Natural killer cell (primary cell): ENCODE measurements at regions of chr18 and their contacts with region 1.

Region 1: GRCh38 chr18:5879479-5879882 is 15.8 kb downstream of the TMEM200C start:
- DNase-seq: peak in 1 of 2 donors; percentile 10
- ATAC-seq: peak in 1 of 3 donors; percentile 35
- H3K4me3 ChIP-seq: no peak overlapping the region
- H3K4me3 Mint-ChIP-seq: no peak overlapping the region
- H3K27ac ChIP-seq: no peak overlapping the region
- H3K27ac Mint-ChIP-seq: no peak overlapping the region
- H3K4me1 ChIP-seq: no peaks in the 10 kb centered on the region
- H3K4me1 Mint-ChIP-seq: no peaks in the 10 kb centered on the region
- H3K27me3 ChIP-seq: peaks cover 2% of the 10 kb centered on the region
- H3K27me3 Mint-ChIP-seq: peaks cover 12 to 35% of the 10 kb centered on the region in 2 donors
- CTCF ChIP-seq: peak; percentile 89

Region 2: DNA sequence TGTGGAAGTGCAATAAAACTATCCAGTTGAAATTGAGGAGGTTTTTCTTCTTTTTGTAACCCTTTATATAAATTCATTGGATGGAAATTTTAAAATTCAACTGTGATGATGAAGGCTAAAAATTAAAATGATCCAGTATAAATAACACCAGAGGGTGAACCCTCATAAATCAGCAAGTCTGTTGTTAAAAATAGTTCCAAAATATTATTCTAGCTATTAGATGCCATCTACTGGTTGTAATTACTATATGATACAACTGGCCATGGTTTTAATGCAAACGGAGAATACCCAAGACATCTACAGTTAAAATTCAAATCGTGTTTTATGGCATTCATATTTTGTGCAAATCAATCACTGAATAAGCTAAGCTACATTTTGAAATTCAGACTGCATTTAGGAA is 38.0 kb before region 1 on chr18:
- intact Hi-C with region 1: no loop called
- DNase-seq: no peak
- ATAC-seq: no peak
- H3K4me3 ChIP-seq: no peak overlapping the region
- H3K4me3 Mint-ChIP-seq: no peak overlapping the region
- H3K27ac ChIP-seq: no peak overlapping the region
- H3K27ac Mint-ChIP-seq: no peak overlapping the region
- H3K4me1 ChIP-seq: no peaks in the 10 kb centered on the region
- H3K4me1 Mint-ChIP-seq: no peaks in the 10 kb centered on the region
- H3K27me3 ChIP-seq: no peaks in the 10 kb centered on the region
- H3K27me3 Mint-ChIP-seq: peaks cover 6 to 11% of the 10 kb centered on the region in 2 donors
- CTCF ChIP-seq: no peak

Region 3: DNA sequence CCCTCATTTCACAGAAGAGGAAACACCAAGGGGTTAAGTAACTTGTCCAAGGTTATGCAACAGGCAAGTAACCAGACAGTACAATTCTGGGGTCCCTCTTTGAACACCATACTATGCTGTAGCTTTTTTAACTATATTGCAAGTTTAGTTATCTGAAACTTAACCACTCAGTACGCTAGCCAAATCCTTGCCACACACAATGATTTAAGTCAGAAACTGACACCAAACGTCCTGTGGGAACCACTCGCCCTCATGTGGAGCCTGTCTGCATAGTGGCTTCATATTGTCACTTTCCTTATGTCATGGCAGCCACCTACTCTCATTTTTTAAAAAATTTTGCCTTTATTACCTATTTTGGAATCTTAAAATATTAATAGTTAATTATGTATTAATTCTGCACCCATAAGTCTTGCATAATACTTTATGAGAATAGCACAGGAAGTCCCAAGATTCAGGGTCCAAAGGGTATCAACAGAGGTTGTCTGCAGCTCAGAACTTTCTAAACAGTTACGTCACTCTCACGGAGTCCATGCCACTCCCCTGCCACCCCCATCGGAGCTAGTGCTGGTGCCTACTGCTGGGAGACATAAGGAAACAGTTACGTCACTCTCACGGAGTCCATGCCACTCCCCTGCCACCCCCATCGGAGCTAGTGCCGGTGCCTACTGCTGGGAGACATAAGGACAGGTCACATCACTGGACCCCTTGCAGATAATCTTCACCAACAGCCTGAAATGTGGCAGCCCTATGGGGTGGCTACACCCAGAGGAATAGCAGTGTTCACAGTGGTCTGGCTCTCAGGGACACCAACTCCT is 436.2 kb after region 1 on chr18:
- intact Hi-C with region 1: loop called (anchors 1 kb)
- DNase-seq: no peak
- ATAC-seq: peak in 2 of 3 donors; percentile 37 to 47
- H3K4me3 ChIP-seq: no peak overlapping the region
- H3K4me3 Mint-ChIP-seq: no peak overlapping the region
- H3K27ac ChIP-seq: no peak overlapping the region
- H3K27ac Mint-ChIP-seq: no peak overlapping the region
- H3K4me1 ChIP-seq: no peaks in the 10 kb centered on the region
- H3K4me1 Mint-ChIP-seq: peaks cover 30 to 34% of the 10 kb centered on the region in 2 donors
- H3K27me3 ChIP-seq: no peaks in the 10 kb centered on the region
- H3K27me3 Mint-ChIP-seq: no peaks in the 10 kb centered on the region
- CTCF ChIP-seq: no peak

Region 4: GRCh38 chr18:6482198-6482977 is 602.9 kb after region 1 on chr18:
- intact Hi-C with region 1: loop called (anchors 1 kb)
- DNase-seq: peak; percentile 4 to 25
- ATAC-seq: peak; percentile 40 to 87 (median 71)
- H3K4me3 ChIP-seq: no peak overlapping the region
- H3K4me3 Mint-ChIP-seq: no peak overlapping the region
- H3K27ac ChIP-seq: no peak overlapping the region
- H3K27ac Mint-ChIP-seq: no peak overlapping the region
- H3K4me1 ChIP-seq: peaks cover 4% of the 10 kb centered on the region
- H3K4me1 Mint-ChIP-seq: peaks cover 0 to 11% of the 10 kb centered on the region in 2 donors
- H3K27me3 ChIP-seq: peaks cover 2% of the 10 kb centered on the region
- H3K27me3 Mint-ChIP-seq: peaks cover 20% of the 10 kb centered on the region in 2 donors
- CTCF ChIP-seq: peak; percentile 69